Tibial artery (tissue), 4 donors: ENCODE measurements at regions of chr11 and their contacts with region 1.

Region 1: DNA sequence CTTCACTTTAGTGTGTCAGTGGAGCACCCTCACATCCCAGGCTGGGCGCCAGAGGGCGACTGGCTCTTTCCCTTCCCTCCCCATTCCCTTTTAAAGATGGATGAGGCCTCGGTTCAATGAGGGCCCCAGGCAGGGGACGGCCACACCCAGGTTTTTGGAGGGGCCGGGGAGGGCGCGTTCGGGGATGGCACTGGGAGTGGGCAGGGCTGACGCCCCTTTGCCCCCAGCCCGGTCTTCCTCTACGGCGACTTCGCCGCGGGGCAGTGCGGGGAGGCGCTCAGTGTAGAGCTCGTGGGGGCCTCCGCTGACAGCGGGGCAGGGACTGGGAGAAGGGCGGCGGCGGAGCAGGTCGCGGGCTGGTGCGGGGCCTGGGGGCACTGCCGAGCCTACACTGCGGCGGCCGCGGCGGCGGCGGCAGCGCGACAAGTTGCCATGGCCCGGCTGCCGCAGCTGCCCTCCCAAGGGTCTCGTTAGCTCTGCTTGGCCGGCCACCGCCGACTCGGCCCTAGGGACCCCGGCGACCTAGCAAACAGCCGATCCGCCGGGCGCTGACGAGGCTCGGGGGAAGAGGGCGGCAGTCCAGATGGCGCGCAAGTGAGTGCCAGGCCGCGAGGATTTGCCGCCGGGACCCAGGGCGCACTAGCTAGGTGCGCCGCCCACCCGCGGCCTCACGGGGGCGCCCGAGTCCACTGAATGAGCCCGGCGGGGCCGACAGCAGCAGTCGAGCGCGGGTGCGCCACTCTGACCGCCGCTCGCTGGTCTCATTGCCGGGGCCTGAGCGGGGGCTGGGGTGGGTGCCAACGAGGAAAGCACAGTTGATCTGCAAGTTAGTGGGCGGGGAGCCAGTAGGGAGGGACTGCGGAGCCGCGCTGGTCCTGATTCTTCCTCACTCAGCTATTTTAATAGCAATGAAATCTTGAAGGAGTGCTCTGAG is 92.7 kb downstream of the RRM1 start:
- DNase-seq: peak; percentile 93 to 94
- H3K4me3 ChIP-seq: peak overlapping the region; percentile 53 to 63
- H3K27ac ChIP-seq: peak overlapping the region; percentile 53 to 66
- H3K4me1 ChIP-seq: peaks cover 0 to 30% (median 21%) of the 10 kb centered on the region in 4 donors
- H3K27me3 ChIP-seq: no peaks in the 10 kb centered on the region
- CTCF ChIP-seq: peak; percentile 94 to 97

Region 2: DNA sequence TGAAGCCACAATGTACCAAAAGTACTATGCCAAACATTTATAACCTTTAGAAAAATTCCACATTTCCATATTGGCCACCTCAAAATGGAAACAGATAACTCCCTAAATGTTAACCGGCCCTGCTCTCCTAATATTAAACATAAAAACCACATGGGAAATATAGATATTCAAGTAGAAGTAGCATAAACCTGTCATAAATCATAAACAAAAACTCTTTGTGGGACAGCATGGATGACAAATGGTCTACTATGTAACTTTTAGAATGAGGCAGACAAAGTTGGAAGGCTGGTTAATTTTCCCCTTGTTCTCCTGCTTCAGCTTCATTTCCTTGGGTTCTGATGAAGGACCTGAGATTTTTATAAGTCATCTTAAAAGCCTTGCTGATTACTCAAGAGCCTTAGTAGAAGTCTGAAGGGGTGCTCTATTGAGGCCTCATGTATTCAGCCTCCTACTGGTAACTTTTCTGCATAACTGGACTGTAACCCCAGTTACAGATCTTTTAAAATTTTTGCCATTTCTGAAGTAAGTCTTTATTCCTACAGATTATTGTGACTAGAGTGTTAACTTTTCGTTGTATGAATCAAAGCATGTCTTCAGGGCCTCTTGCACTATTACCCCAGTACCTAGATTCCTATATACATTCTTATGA is 215.4 kb before region 1 on chr11:
- intact Hi-C with region 1: no loop called
- DNase-seq: no peak
- H3K4me3 ChIP-seq: no peak overlapping the region
- H3K27ac ChIP-seq: no peak overlapping the region
- H3K4me1 ChIP-seq: peaks cover 0 to 4% (median 2%) of the 10 kb centered on the region in 4 donors
- H3K27me3 ChIP-seq: no peaks in the 10 kb centered on the region
- CTCF ChIP-seq: no peak

Region 3: DNA sequence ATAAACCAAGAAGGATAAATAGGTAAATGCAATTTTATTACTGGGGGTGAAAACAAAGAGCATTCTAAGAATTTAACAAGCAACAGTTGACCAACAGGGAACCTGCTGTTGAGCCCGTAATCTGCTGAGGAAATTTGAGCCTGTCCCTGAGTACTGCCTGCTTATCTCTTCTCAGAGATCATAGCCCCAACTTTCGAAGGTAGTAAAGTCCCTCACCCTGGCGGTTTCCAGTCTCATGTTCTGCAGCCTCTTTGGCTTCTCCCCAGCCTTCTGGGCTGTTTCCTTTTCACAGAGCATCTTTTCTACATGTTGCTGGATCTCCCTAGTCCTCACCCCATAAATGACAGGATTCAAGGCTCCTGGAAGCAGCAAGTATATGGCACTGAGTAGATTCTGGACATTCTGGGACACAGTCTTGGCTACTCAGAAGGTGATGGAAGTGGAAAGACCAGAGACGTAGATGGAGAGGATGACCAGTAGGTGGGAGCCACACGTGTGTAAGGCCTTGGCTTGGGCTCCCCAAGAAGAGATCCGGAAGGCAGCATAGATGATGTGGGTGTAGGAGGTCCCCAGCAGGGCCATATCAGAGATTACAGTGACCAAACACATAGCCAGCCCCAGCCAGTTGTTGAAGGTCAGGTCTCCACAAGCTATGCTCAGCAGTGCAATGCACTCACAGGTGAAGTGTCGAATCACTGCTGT is 41.1 kb before region 1 on chr11:
- intact Hi-C with region 1: no loop called
- DNase-seq: no peak
- H3K4me3 ChIP-seq: no peak overlapping the region
- H3K27ac ChIP-seq: no peak overlapping the region
- H3K4me1 ChIP-seq: no peaks in the 10 kb centered on the region
- H3K27me3 ChIP-seq: no peaks in the 10 kb centered on the region
- CTCF ChIP-seq: no peak

Region 4: DNA sequence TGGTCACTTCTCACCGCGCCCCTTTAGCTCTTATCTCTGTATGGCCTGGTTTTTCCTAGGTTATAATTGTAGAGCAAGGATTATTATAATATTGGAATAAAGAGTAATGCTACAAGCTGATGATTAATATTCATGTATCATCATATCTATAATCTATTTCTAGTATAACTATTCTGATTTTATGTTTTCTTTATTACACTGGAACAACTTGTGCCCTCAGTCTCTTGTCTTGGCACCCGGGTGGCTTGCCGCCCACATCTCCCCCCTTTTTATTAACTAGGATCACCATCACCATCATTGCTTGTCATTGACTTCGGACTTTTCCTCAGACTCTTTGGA is 306.1 kb after region 1 on chr11:
- intact Hi-C with region 1: loop called (anchors 1 kb)
- DNase-seq: no peak
- H3K4me3 ChIP-seq: no peak overlapping the region
- H3K27ac ChIP-seq: no peak overlapping the region
- H3K4me1 ChIP-seq: peaks cover 0 to 4% (median 2%) of the 10 kb centered on the region in 4 donors
- H3K27me3 ChIP-seq: peaks cover 0 to 15% of the 10 kb centered on the region in 2 donors
- CTCF ChIP-seq: no peak